ENCODE measurements at regions of chr6 and their contacts with region 1.

Region 1: DNA sequence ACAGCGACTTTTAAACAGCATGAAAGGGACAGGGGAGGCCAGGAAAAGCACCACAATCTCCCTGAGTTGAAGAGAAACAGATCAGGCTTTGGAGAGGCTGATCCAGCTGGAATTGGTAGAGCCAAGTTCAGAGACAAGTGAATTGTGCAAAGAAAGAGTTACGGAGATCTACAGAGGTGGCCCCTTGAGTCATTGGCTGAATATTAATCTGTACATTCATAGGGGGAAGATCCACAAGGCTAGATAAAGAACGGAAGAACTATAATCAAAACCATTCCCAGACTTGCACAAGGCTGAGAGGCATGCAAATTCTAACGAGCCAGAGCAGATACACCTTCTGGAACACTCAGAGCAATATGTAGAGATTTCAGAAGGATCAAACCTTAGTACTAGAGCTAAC is 14.2 kb upstream of the FOXQ1 start:
- DNase-seq: no peak
- H3K4me3 Mint-ChIP-seq: peak overlapping the region; percentile 48
- H3K27ac Mint-ChIP-seq: peak overlapping the region; percentile 92
- H3K4me1 Mint-ChIP-seq: peaks cover 37% of the 10 kb centered on the region
- H3K27me3 Mint-ChIP-seq: no peaks in the 10 kb centered on the region
- CTCF ChIP-seq: no peak

Region 2: GRCh38 chr6:1153696-1154245 is 144.0 kb before region 1 on chr6:
- CTCF ChIA-PET with region 1: interaction called, 14 read pairs
- intact Hi-C with region 1: no loop called
- DNase-seq: no peak
- H3K4me3 Mint-ChIP-seq: no peak overlapping the region
- H3K27ac Mint-ChIP-seq: no peak overlapping the region
- H3K4me1 Mint-ChIP-seq: no peaks in the 10 kb centered on the region
- H3K27me3 Mint-ChIP-seq: no peaks in the 10 kb centered on the region
- CTCF ChIP-seq: no peak

Region 3: GRCh38 chr6:1227935-1228753 is 69.6 kb before region 1 on chr6:
- CTCF ChIA-PET with region 1: no interaction called
- intact Hi-C with region 1: no loop called
- DNase-seq: no peak
- H3K4me3 Mint-ChIP-seq: no peak overlapping the region
- H3K27ac Mint-ChIP-seq: no peak overlapping the region
- H3K4me1 Mint-ChIP-seq: peaks cover 7% of the 10 kb centered on the region
- H3K27me3 Mint-ChIP-seq: no peaks in the 10 kb centered on the region
- CTCF ChIP-seq: no peak